IMR-90 (cell line): ENCODE measurements at regions of chr17 and their contacts with region 1.

Region 1: GRCh38 chr17:46115699-46116098 is 77.5 kb downstream of the KANSL1 start:
- DNase-seq: peak; percentile 18
- ATAC-seq: peak; percentile 44
- H3K4me3 ChIP-seq: no peak overlapping the region
- H3K27ac ChIP-seq: no peak overlapping the region
- H3K4me1 ChIP-seq: peaks cover 8% of the 10 kb centered on the region
- H3K27me3 ChIP-seq: no peaks in the 10 kb centered on the region
- CTCF ChIP-seq: no peak
- POLR2A ChIP-seq: no peak
- RAD21 ChIP-seq: no peak

Region 2: GRCh38 chr17:46154151-46154816 is 38.6 kb after region 1 on chr17:
- CTCF ChIA-PET with region 1: no interaction called
- POLR2A ChIA-PET with region 1: no interaction called
- dilution Hi-C with region 1: no loop called
- in situ Hi-C with region 1: no loop called
- intact Hi-C with region 1: loop called (anchors 5 kb)
- DNase-seq: peak; percentile 38
- ATAC-seq: peak; percentile 52
- H3K4me3 ChIP-seq: no peak overlapping the region
- H3K27ac ChIP-seq: no peak overlapping the region
- H3K4me1 ChIP-seq: peaks cover 20% of the 10 kb centered on the region
- H3K27me3 ChIP-seq: no peaks in the 10 kb centered on the region
- CTCF ChIP-seq: no peak
- POLR2A ChIP-seq: no peak
- RAD21 ChIP-seq: no peak